Breast epithelium (tissue), 4 donors: ENCODE measurements at regions of chr9 and their contacts with region 1.

Region 1: GRCh38 chr9:114218264-114219120 is 63.2 kb downstream of the COL27A1 start:
- DNase-seq: no peak
- H3K4me3 ChIP-seq: no peak overlapping the region
- H3K27ac ChIP-seq: peak overlapping the region in 1 of 2 donors; percentile 50
- H3K4me1 ChIP-seq: no peaks in the 10 kb centered on the region
- H3K27me3 ChIP-seq: no peaks in the 10 kb centered on the region
- CTCF ChIP-seq: no peak
- POLR2A ChIP-seq: no peak

Region 2: DNA sequence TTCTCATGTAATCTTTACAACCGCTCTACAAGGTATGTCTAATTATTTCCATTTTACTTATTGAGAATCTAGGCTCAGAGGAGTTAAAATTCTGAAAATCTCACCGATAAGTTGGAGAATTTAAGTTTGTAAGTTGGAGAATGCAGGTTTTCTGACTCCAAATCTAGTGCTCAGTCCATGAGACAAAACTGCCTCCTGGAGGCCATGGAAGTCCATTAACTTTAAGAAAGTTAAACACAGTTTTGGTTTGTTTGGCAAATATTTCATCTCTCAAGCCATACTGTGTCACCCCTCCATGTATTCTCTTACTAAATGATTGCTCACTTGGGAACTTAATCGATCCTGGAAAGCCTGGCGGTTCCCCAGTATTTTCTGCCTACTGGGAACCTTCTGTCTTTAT is 1553.1 kb before region 1 on chr9:
- intact Hi-C with region 1: no loop called
- DNase-seq: no peak
- H3K4me3 ChIP-seq: no peak overlapping the region
- H3K27ac ChIP-seq: no peak overlapping the region
- H3K4me1 ChIP-seq: no peaks in the 10 kb centered on the region
- H3K27me3 ChIP-seq: no peaks in the 10 kb centered on the region
- CTCF ChIP-seq: no peak
- POLR2A ChIP-seq: no peak

Region 3: GRCh38 chr9:114229295-114229694 is 10.8 kb after region 1 on chr9:
- intact Hi-C with region 1: loop called (anchors 1 kb)
- DNase-seq: no peak
- H3K4me3 ChIP-seq: no peak overlapping the region
- H3K27ac ChIP-seq: no peak overlapping the region
- H3K4me1 ChIP-seq: no peaks in the 10 kb centered on the region
- H3K27me3 ChIP-seq: no peaks in the 10 kb centered on the region
- CTCF ChIP-seq: no peak
- POLR2A ChIP-seq: no peak